CD8-positive, alpha-beta T cell (primary cell): ENCODE measurements at regions of chr10 and their contacts with region 1.

Region 1: DNA sequence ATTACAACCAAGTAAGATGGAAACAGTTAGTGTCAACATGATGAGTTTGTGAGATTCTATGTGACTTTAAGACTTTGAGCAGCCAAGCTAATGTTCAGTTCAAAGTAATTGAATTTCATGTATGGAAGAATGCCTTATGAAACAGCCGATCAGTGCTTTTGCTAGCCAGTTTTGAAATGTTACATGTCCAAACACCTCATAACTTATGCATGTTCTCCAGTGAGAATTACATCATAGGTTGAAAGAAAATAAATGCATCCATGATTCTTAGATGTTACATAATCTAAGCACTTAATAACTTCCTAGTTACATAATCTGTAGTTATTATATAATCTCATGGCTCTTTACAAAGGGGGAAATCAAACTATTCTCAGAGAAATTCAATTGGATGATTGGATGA is 211.3 kb downstream of the BICC1 start:
- DNase-seq: no peak
- ATAC-seq: no peak
- H3K4me3 ChIP-seq: no peak overlapping the region
- H3K4me3 Mint-ChIP-seq: no peak overlapping the region
- H3K27ac ChIP-seq: no peak overlapping the region
- H3K27ac Mint-ChIP-seq: no peak overlapping the region
- H3K4me1 ChIP-seq: no peaks in the 10 kb centered on the region
- H3K4me1 Mint-ChIP-seq: no peaks in the 10 kb centered on the region
- H3K27me3 ChIP-seq: no peaks in the 10 kb centered on the region
- H3K27me3 Mint-ChIP-seq: no peaks in the 10 kb centered on the region
- CTCF ChIP-seq: no peak

Region 2: DNA sequence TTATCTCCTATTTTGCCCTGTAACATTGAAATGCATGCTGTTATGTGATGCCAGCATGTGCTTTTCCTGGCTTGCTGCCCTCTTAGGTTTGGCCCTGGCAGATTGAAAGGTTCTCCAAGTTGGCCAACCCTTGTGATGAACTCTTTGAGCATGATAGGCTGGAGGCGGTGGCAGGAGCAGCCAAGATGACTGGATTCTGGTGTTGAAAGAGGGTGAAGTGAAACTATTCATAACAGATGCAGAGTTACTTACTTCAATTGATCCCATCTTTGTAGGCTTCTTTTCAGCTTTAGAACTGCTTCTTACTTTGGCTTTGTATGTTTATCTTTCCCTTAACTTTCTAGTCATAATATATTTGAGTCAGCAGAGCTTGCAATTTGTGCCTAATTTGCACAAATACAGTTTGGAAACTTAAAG is 153.7 kb before region 1 on chr10:
- CTCF ChIA-PET with region 1: no interaction called
- POLR2A ChIA-PET with region 1: no interaction called
- intact Hi-C with region 1: no loop called
- DNase-seq: no peak
- ATAC-seq: no peak
- H3K4me3 ChIP-seq: no peak overlapping the region
- H3K4me3 Mint-ChIP-seq: no peak overlapping the region
- H3K27ac ChIP-seq: no peak overlapping the region
- H3K27ac Mint-ChIP-seq: no peak overlapping the region
- H3K4me1 ChIP-seq: no peaks in the 10 kb centered on the region
- H3K4me1 Mint-ChIP-seq: no peaks in the 10 kb centered on the region
- H3K27me3 ChIP-seq: no peaks in the 10 kb centered on the region
- H3K27me3 Mint-ChIP-seq: no peaks in the 10 kb centered on the region
- CTCF ChIP-seq: no peak

Region 3: DNA sequence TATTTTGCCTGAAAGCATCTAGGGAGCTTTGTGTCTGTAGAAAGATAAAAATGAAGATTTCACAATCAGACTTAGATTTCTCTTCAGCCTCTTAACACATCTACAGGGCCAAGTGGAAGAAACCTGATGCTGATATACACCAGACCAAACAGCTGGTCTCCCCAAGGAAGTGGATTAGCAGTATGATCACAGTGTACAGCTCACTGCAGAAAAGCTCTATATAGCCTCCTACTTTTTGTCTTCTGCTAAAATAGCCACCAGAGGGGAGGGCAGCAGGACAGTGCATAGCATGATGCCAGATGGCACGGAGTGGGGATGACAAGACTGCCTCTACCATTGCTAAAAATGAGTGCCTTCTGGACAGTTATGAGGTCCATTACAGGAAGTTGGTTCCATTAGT is 622.4 kb after region 1 on chr10:
- CTCF ChIA-PET with region 1: no interaction called
- POLR2A ChIA-PET with region 1: no interaction called
- intact Hi-C with region 1: loop called in 1 of 2 experiments (anchors 10 kb)
- DNase-seq: no peak
- ATAC-seq: no peak
- H3K4me3 ChIP-seq: no peak overlapping the region
- H3K4me3 Mint-ChIP-seq: no peak overlapping the region
- H3K27ac ChIP-seq: no peak overlapping the region
- H3K27ac Mint-ChIP-seq: no peak overlapping the region
- H3K4me1 ChIP-seq: no peaks in the 10 kb centered on the region
- H3K4me1 Mint-ChIP-seq: no peaks in the 10 kb centered on the region
- H3K27me3 ChIP-seq: no peaks in the 10 kb centered on the region
- H3K27me3 Mint-ChIP-seq: no peaks in the 10 kb centered on the region
- CTCF ChIP-seq: no peak

Region 4: DNA sequence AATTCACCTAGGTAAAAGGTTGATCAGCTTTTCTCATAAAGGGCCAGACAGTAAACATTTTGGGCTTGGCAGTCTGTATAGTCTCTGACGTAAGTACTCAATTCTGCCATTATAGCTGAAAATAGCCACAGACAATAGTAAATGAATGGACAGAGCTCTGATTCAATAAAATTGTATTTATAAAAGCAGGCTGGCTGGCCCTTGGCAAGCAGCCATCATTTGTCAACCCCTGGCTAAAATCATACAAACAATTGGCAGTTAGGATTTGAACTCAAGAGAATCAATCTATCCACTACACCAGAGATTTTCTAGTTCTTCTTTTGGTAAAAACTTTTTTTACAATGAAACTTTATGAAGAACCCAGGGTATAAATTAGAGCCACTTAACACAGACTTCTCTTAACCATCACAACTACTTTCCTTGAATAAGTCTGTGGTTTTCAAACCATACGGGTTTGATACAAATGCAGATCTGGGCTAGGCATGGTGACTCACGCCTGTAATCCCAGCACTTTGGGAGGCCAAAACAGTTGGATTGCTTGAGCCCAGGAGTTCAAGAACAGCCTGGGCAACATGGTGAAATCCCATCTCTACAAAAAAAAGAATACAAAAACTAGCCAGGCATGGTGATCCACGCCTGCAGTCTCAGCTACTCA is 861.2 kb after region 1 on chr10:
- CTCF ChIA-PET with region 1: no interaction called
- POLR2A ChIA-PET with region 1: no interaction called
- intact Hi-C with region 1: no loop called
- DNase-seq: no peak
- ATAC-seq: no peak
- H3K4me3 ChIP-seq: no peak overlapping the region
- H3K4me3 Mint-ChIP-seq: no peak overlapping the region
- H3K27ac ChIP-seq: no peak overlapping the region
- H3K27ac Mint-ChIP-seq: no peak overlapping the region
- H3K4me1 ChIP-seq: no peaks in the 10 kb centered on the region
- H3K4me1 Mint-ChIP-seq: no peaks in the 10 kb centered on the region
- H3K27me3 ChIP-seq: no peaks in the 10 kb centered on the region
- H3K27me3 Mint-ChIP-seq: peaks cover 7% of the 10 kb centered on the region
- CTCF ChIP-seq: no peak